MCF 10A (cell line): ENCODE measurements at regions of chr6 and their contacts with region 1.

Region 1: GRCh38 chr6:75208298-75209183 is 2.7 kb upstream of the COL12A1 start:
- DNase-seq: peak; percentile 84
- H3K4me3 Mint-ChIP-seq: peak overlapping the region; percentile 15
- H3K27ac Mint-ChIP-seq: no peak overlapping the region
- H3K4me1 Mint-ChIP-seq: peaks cover 29% of the 10 kb centered on the region
- H3K27me3 Mint-ChIP-seq: peaks cover 8% of the 10 kb centered on the region
- CTCF ChIP-seq: peak; percentile 83

Region 2: DNA sequence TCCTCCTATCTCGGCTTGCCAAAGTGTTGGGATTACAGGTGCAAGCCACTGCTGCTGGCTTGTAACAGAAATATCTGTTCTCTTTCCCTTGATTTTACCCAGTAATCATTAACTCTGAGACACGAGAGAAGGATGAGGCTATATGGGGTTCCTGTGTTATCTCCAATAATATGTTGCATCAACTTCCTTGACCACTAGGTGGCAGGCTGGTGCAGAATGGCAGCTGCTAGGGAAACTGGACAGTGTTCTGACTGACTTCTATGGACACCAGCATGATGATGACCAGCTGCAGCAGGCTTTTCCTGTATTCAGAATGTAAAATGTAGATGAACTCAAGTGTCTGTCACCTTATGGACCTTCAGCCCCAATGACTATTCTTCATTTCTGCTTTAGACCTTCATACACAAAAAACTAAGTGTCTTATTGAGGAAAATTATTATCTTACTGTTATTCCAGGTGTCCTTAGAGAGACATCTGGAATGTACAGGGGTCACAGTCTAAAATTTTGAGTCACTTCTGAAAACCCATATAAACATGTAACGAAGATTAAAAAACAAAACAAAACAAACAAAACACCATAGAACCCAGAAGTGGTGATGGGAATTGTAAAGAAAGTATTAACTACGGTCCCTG is 1533.0 kb before region 1 on chr6:
- CTCF ChIA-PET with region 1: interaction called, 6 read pairs
- POLR2A ChIA-PET with region 1: no interaction called
- intact Hi-C with region 1: loop called (anchors 10 kb)
- DNase-seq: peak; percentile 90
- H3K4me3 Mint-ChIP-seq: no peak overlapping the region
- H3K27ac Mint-ChIP-seq: no peak overlapping the region
- H3K4me1 Mint-ChIP-seq: peaks cover 18% of the 10 kb centered on the region
- H3K27me3 Mint-ChIP-seq: no peaks in the 10 kb centered on the region
- CTCF ChIP-seq: peak; percentile 85

Region 3: GRCh38 chr6:73768558-73768957 is 1440.0 kb before region 1 on chr6:
- CTCF ChIA-PET with region 1: interaction called, 12 read pairs
- POLR2A ChIA-PET with region 1: interaction called, 5 read pairs
- intact Hi-C with region 1: no loop called
- DNase-seq: no peak
- H3K4me3 Mint-ChIP-seq: no peak overlapping the region
- H3K27ac Mint-ChIP-seq: no peak overlapping the region
- H3K4me1 Mint-ChIP-seq: peaks cover 17% of the 10 kb centered on the region
- H3K27me3 Mint-ChIP-seq: no peaks in the 10 kb centered on the region
- CTCF ChIP-seq: no peak

Region 4: DNA sequence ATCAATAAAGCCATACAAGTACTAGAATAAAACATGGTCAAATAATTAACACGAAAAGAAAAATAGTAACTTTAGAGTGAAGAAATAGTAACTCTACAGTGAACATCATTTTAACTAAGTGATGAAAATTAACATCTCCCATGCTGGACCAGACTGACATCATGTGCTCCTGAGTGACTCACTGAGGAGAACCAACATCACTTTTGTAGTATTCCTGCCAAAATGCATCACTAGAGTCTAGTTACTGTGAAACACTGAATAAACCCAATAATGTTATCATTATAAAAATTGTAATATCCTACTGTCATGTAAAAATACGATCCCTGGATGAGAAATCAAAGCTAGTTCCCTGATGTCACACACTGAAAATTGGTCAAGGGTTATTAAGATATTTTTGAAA is 1151.2 kb before region 1 on chr6:
- CTCF ChIA-PET with region 1: interaction called, 16 read pairs
- POLR2A ChIA-PET with region 1: no interaction called
- intact Hi-C with region 1: no loop called
- DNase-seq: no peak
- H3K4me3 Mint-ChIP-seq: no peak overlapping the region
- H3K27ac Mint-ChIP-seq: no peak overlapping the region
- H3K4me1 Mint-ChIP-seq: no peaks in the 10 kb centered on the region
- H3K27me3 Mint-ChIP-seq: no peaks in the 10 kb centered on the region
- CTCF ChIP-seq: no peak

Region 5: GRCh38 chr6:74409447-74409846 is 799.1 kb before region 1 on chr6:
- CTCF ChIA-PET with region 1: interaction called, 132 read pairs
- POLR2A ChIA-PET with region 1: interaction called, 31 read pairs
- intact Hi-C with region 1: loop called (anchors 1 kb)
- DNase-seq: peak; percentile 62
- H3K4me3 Mint-ChIP-seq: no peak overlapping the region
- H3K27ac Mint-ChIP-seq: no peak overlapping the region
- H3K4me1 Mint-ChIP-seq: no peaks in the 10 kb centered on the region
- H3K27me3 Mint-ChIP-seq: no peaks in the 10 kb centered on the region
- CTCF ChIP-seq: peak; percentile 70

Region 6: DNA sequence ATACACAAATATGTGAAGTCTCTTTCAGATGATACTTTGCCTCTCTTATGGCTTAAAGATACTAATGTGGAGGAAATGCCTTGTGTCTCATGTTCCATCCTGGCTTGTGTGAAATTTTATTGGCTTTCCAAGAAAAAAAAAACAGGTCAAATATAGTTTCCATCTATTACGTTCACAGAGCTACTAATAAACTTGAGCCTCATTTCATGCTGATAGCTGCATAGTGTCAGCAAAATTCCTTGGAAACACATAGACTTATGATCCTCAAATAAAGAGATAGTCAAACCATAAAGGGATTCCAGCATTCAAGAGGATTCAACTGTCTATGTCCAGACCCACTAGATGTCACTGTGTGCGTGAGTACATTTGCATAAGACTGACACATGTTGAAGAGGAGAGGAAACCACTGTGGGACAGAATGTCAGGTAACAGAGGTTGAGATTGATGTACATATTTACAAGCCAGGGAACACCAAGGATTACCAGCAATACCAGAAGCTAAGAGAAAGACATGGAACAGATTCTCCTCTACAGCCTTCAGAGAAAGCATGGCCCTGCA is 269.3 kb before region 1 on chr6:
- CTCF ChIA-PET with region 1: interaction called, 31 read pairs
- POLR2A ChIA-PET with region 1: interaction called, 9 read pairs
- intact Hi-C with region 1: loop called (anchors 1 kb)
- DNase-seq: peak; percentile 30
- H3K4me3 Mint-ChIP-seq: no peak overlapping the region
- H3K27ac Mint-ChIP-seq: no peak overlapping the region
- H3K4me1 Mint-ChIP-seq: peaks cover 30% of the 10 kb centered on the region
- H3K27me3 Mint-ChIP-seq: no peaks in the 10 kb centered on the region
- CTCF ChIP-seq: peak; percentile 15

Region 7: DNA sequence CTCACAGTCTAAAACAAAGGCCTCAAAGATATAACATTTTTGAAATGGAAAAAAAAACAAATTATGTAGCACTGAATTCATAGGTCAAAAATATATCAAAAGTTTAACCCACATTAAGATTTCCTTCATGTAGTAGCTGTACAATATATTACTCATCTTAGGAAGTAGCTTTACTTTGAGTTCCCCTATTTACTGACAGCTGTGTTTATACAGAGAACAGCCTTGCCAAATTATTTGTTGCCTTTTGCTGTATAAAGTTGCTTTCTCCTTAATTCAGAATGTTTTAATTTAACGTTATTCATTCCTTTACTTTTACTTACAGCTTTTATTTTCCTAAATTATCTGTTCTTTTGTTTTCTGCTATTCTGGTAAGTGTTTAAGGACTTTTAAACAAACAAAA is 183.7 kb before region 1 on chr6:
- CTCF ChIA-PET with region 1: no interaction called
- POLR2A ChIA-PET with region 1: no interaction called
- intact Hi-C with region 1: no loop called
- DNase-seq: no peak
- H3K4me3 Mint-ChIP-seq: no peak overlapping the region
- H3K27ac Mint-ChIP-seq: no peak overlapping the region
- H3K4me1 Mint-ChIP-seq: no peaks in the 10 kb centered on the region
- H3K27me3 Mint-ChIP-seq: no peaks in the 10 kb centered on the region
- CTCF ChIP-seq: no peak

Region 8: GRCh38 chr6:75230484-75231325 is 22.2 kb after region 1 on chr6:
- CTCF ChIA-PET with region 1: interaction called, 46 read pairs
- POLR2A ChIA-PET with region 1: interaction called, 3 read pairs
- intact Hi-C with region 1: loop called (anchors 1 kb)
- DNase-seq: peak; percentile 67
- H3K4me3 Mint-ChIP-seq: no peak overlapping the region
- H3K27ac Mint-ChIP-seq: no peak overlapping the region
- H3K4me1 Mint-ChIP-seq: no peaks in the 10 kb centered on the region
- H3K27me3 Mint-ChIP-seq: no peaks in the 10 kb centered on the region
- CTCF ChIP-seq: peak; percentile 66

Region 9: GRCh38 chr6:75308250-75308988 is 99.9 kb after region 1 on chr6:
- CTCF ChIA-PET with region 1: no interaction called
- POLR2A ChIA-PET with region 1: no interaction called
- intact Hi-C with region 1: no loop called
- DNase-seq: no peak
- H3K4me3 Mint-ChIP-seq: no peak overlapping the region
- H3K27ac Mint-ChIP-seq: no peak overlapping the region
- H3K4me1 Mint-ChIP-seq: no peaks in the 10 kb centered on the region
- H3K27me3 Mint-ChIP-seq: peaks cover 3% of the 10 kb centered on the region
- CTCF ChIP-seq: no peak